Activated CD4-positive, alpha-beta memory T cell treated with anti-CD3 and anti-CD28 coated beads for 36 hours (primary cell): ENCODE measurements at regions of chr14 and their contacts with region 1.

Region 1: GRCh38 chr14:75278422-75279161 is at the start of gene FOS:
- DNase-seq: peak; percentile 92
- H3K4me3 Mint-ChIP-seq: peak within 1 kb of the TSS; percentile 92
- H3K27ac Mint-ChIP-seq: peak within 1 kb of the TSS; percentile 91
- H3K4me1 Mint-ChIP-seq: peaks cover 48% of the 10 kb centered on the region
- H3K27me3 Mint-ChIP-seq: peaks cover 11% of the 10 kb centered on the region
- total RNA-seq, gene FOS: 21.1 to 26.7 TPM

Region 2: DNA sequence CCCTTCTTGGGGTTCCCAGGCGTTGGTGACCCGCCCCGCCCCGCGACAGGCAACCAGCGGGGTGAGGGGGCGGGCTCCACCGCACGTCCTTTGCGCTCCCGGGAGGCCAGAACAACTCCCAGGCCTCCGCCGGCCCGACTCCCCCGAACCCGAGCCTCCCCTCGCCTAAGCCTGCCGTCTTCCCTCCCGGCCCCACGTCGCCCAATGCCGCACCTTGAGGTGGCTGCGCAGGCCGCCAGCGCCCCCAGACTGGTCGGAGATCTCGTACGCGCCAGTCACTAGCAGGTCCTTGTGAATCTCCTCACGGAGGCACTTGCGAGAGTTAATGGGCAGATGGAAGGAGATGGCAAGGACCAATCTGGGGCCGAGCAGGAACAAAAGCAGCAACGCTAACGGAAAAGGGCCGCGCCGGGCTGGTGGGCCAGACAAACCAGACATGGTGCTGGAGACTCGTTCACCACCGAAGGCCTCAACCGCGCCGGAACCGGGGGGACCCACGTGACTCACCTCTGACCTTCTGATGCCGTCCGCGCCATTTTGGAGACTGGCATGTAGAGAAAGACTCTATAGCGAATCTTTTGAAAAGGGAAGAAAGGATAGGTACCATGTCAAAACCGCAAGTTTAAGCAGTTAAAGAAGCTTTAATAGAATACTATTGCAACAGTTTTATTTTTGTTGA is 102.3 kb before region 1 on chr14 and contains the start of gene TMED10:
- CTCF ChIA-PET with region 1: no interaction called
- POLR2A ChIA-PET with region 1: no interaction called
- intact Hi-C with region 1: loop called (anchors 1 kb)
- DNase-seq: peak; percentile 94
- H3K4me3 Mint-ChIP-seq: peak within 1 kb of the TSS; percentile 86
- H3K27ac Mint-ChIP-seq: peak within 1 kb of the TSS; percentile 98
- H3K4me1 Mint-ChIP-seq: peaks cover 42% of the 10 kb centered on the region
- H3K27me3 Mint-ChIP-seq: no peaks in the 10 kb centered on the region
- total RNA-seq, gene TMED10: 189 to 201 TPM

Region 3: DNA sequence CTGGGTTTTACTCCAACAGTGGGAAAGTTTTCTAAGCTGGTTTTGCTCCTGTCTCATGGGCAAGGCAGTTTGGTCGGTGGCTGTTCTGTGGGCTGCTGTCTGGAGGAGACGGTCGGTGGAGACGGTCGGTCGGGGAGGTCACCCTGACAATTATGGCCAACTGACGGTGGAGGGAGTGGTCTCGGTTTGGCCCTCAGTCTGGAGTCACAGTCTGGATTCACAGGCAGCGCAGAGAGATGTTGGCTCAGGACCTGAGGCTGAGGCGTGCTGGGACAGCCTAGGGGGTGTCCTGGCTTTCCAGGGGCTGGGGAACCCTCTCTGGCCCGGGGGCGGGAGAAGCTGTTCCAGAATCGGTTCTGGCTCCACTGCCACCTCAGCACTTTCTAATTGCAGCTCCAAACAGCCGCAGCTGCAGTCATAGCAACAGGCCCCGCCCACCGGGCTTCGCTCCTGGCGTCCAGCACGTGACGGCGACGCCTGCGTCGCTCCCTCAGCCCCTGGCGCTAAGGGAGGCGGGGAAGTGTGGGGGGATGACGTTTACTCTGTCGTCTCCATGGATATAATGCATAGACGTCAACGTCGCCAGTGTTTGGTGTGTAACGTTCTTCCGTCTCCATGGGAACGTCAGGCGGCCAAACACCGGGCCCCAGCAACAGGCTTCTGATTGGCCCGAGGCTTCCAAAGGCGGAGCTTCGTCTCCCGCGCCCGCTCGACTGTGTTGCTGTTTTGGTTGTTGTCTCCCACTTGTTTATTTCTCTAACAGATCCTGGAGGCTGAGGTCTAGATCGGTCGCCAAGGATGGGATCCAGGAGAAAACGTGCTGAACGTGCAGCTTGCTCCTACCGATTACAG is 19.8 kb before region 1 on chr14:
- CTCF ChIA-PET with region 1: interaction called, 3 read pairs
- POLR2A ChIA-PET with region 1: interaction called, 10 read pairs
- intact Hi-C with region 1: loop called (anchors 1 kb)
- DNase-seq: peak; percentile 99
- H3K4me3 Mint-ChIP-seq: peak overlapping the region; percentile 86
- H3K27ac Mint-ChIP-seq: peak overlapping the region; percentile 84
- H3K4me1 Mint-ChIP-seq: peaks cover 25% of the 10 kb centered on the region
- H3K27me3 Mint-ChIP-seq: peaks cover 6% of the 10 kb centered on the region

Region 4: DNA sequence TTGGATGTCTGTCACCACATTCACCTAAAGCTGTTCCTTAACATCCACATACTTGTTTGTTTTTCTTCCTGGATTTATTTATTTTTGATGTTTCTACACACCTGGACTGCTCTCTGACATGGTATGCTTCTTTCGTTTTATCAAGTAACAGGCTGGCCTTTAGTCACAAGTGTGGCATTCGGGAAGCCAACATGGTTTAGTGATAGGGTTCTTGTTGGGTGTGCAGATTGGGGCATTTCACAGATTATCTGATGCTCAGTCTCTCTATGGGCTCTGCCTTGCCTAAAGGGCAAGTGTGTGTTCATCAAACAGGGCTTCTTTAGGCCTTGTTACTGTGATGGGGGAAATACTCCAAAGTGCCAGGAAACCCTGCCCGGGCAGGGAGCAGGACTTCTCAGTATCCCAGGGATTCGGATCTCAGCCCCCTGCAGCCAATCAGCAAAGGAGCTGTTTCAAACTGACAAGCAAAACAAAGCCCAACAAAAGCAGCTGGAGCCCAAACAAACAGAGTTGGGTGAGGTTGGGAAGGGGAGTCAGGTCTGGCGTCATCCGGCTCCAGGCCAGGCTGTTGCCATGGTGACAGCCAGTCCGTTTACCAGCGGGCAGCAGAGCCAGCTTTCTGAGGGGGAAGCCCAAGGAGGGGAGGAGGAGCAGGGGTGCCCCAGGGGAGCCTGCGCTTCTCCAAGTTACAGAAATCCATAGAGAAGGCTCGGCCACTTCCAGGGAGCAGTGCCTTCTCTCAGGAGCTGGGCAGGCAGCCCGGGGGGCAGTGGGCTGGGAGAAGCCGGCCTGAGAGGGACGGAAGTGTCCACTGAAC is 31.9 kb after region 1 on chr14:
- CTCF ChIA-PET with region 1: no interaction called
- POLR2A ChIA-PET with region 1: no interaction called
- intact Hi-C with region 1: no loop called
- DNase-seq: no peak
- H3K4me3 Mint-ChIP-seq: no peak overlapping the region
- H3K27ac Mint-ChIP-seq: no peak overlapping the region
- H3K4me1 Mint-ChIP-seq: peaks cover 7% of the 10 kb centered on the region
- H3K27me3 Mint-ChIP-seq: peaks cover 5% of the 10 kb centered on the region